ENCODE measurements at regions of chr1 and their contacts with region 1.

Region 1: GRCh38 chr1:247373721-247374141 is 42.1 kb upstream of the ZNF496 start:
- DNase-seq: no peak
- ATAC-seq: peak; percentile 84

Region 2: DNA sequence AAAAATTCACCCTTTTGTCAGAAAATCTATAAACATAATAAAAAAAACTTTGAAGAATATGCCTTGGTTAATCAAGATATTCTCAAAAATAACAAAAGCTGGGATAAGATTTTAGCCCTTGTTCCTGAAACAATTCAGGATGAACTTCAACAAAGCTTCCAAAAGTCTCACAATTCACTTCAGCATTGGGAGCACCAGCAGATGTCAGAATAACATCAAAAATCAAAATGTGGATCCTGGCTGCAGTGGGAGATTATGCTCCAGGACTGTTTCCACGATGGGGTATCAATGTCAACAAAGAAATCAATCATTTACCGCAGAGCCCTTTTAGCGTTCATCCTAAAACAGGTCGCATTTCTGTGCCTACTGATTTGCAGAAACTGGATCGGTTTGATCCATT is 330.3 kb before region 1 on chr1:
- intact Hi-C with region 1: loop called (anchors 10 kb)
- DNase-seq: no peak
- ATAC-seq: no peak